Psoas muscle (tissue), 8 donors: ENCODE measurements at regions of chr1 and their contacts with region 1.

Region 1: GRCh38 chr1:52748119-52748518 is 21.9 kb downstream of the ZYG11B start:
- DNase-seq: no peak
- ATAC-seq: peak in 2 of 4 donors; percentile 48 to 63
- H3K4me3 ChIP-seq: no peak overlapping the region
- H3K27ac ChIP-seq: no peak overlapping the region
- H3K4me1 ChIP-seq: peaks cover 41% of the 10 kb centered on the region
- H3K27me3 ChIP-seq: no peaks in the 10 kb centered on the region
- CTCF ChIP-seq: peak; percentile 54

Region 2: GRCh38 chr1:52702886-52703787 is 45.0 kb before region 1 on chr1:
- intact Hi-C with region 1: loop called (anchors 2 kb)
- DNase-seq: peak; percentile 92 to 94
- ATAC-seq: peak; percentile 82 to 87 (median 84)
- H3K4me3 ChIP-seq: peak overlapping the region; percentile 72
- H3K27ac ChIP-seq: peak overlapping the region; percentile 96
- H3K4me1 ChIP-seq: peaks cover 23% of the 10 kb centered on the region
- H3K27me3 ChIP-seq: no peaks in the 10 kb centered on the region
- CTCF ChIP-seq: no peak

Region 3: DNA sequence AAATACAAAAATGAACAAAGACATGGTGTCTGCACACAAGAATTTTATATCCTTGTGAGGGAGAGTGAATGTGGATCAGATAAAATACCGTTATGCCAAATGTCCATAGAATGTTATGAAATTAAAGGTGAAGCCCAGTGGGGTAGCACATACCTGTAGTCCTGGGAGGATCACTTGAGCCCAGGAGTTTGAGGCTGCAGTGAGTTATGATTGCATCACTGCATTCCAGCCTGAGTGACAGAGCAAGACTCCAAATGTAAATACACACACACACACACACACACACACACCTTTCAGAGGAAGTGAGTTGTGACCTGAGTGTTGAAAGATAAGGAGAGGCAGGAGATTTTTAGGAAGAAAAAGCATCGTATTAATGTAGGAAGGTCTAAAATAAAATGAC is 66.3 kb after region 1 on chr1:
- intact Hi-C with region 1: no loop called
- DNase-seq: no peak
- ATAC-seq: no peak
- H3K4me3 ChIP-seq: no peak overlapping the region
- H3K27ac ChIP-seq: no peak overlapping the region
- H3K4me1 ChIP-seq: no peaks in the 10 kb centered on the region
- H3K27me3 ChIP-seq: no peaks in the 10 kb centered on the region
- CTCF ChIP-seq: no peak